ENCODE measurements at regions of chr1 and their contacts with region 1.

Region 1: GRCh38 chr1:180020017-180020416 is 65.4 kb downstream of the CEP350 start:
- DNase-seq: no peak
- ATAC-seq: no peak
- H3K4me3 ChIP-seq: no peak overlapping the region
- H3K27ac ChIP-seq: no peak overlapping the region
- H3K4me1 ChIP-seq: no peaks in the 10 kb centered on the region
- H3K27me3 ChIP-seq: no peaks in the 10 kb centered on the region
- CTCF ChIP-seq: no peak
- POLR2A ChIP-seq: no peak

Region 2: GRCh38 chr1:178928985-178929384 is 1091.0 kb before region 1 on chr1:
- intact Hi-C with region 1: no loop called
- DNase-seq: no peak
- ATAC-seq: no peak
- H3K4me3 ChIP-seq: no peak overlapping the region
- H3K27ac ChIP-seq: peak overlapping the region in 2 of 12 donors; percentile 22 to 92
- H3K4me1 ChIP-seq: peaks cover 0 to 54% (median 27%) of the 10 kb centered on the region in 12 donors
- H3K27me3 ChIP-seq: no peaks in the 10 kb centered on the region
- CTCF ChIP-seq: no peak
- POLR2A ChIP-seq: no peak

Region 3: DNA sequence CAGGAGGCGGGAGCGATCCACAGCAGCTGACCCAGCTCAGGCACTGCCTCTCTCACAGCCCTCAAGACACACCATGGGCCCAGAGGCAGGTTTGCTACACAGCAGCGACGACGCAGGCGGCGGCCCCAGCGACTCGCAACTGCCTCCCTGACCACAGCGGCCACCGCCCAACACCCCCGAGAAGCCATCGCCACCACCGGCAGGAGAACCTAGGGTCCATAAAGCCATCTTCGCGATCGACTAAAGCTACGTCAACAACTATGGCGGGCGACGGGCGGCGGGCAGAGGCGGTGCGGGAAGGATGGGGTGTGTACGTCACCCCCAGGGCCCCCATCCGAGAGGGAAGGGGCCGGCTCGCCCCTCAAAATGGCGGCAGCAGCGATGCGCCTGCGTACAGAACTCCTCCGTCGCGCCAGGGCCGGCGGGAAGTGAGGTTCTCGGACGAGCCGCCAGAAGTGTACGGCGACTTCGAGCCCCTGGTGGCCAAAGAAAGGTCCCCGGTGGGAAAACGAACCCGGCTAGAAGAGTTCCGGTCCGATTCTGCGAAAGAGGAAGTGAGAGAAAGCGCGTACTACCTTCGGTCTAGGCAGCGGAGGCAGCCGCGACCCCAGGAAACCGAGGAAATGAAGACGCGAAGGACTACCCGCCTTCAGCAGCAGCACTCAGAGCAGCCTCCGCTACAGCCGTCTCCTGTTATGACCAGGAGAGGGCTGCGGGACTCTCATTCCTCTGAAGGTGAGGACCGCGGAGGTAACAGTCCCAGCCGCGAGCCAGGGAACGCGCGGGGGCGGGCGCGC is 137.6 kb before region 1 on chr1 and contains the start of gene TOR1AIP1:
- intact Hi-C with region 1: no loop called
- DNase-seq: peak; percentile 97 to 99 (median 98)
- ATAC-seq: peak; percentile 93 to 96 (median 95)
- H3K4me3 ChIP-seq: peak within 1 kb of the TSS; percentile 72 to 88 (median 82)
- H3K27ac ChIP-seq: peak within 1 kb of the TSS; percentile 98 to 100 (median 99)
- H3K4me1 ChIP-seq: peaks cover 0 to 58% (median 38%) of the 10 kb centered on the region in 12 donors
- H3K27me3 ChIP-seq: no peaks in the 10 kb centered on the region
- CTCF ChIP-seq: peak in 11 of 12 donors; percentile 29 to 58 (median 51)
- POLR2A ChIP-seq: peak; percentile 3 to 88
- total RNA-seq, gene TOR1AIP1: 25.4 to 68.2 (median 47.4) TPM

Region 4: GRCh38 chr1:180057883-180058396 is 37.9 kb after region 1 on chr1:
- intact Hi-C with region 1: loop called in 1 of 10 experiments (anchors 5 kb)
- DNase-seq: no peak
- ATAC-seq: no peak
- H3K4me3 ChIP-seq: no peak overlapping the region
- H3K27ac ChIP-seq: no peak overlapping the region
- H3K4me1 ChIP-seq: no peaks in the 10 kb centered on the region
- H3K27me3 ChIP-seq: no peaks in the 10 kb centered on the region
- CTCF ChIP-seq: no peak
- POLR2A ChIP-seq: no peak

Measured in heart left ventricle (tissue), 16 donors.